HEK293 (cell line): ENCODE measurements at regions of chr1 and their contacts with region 1.

Region 1: DNA sequence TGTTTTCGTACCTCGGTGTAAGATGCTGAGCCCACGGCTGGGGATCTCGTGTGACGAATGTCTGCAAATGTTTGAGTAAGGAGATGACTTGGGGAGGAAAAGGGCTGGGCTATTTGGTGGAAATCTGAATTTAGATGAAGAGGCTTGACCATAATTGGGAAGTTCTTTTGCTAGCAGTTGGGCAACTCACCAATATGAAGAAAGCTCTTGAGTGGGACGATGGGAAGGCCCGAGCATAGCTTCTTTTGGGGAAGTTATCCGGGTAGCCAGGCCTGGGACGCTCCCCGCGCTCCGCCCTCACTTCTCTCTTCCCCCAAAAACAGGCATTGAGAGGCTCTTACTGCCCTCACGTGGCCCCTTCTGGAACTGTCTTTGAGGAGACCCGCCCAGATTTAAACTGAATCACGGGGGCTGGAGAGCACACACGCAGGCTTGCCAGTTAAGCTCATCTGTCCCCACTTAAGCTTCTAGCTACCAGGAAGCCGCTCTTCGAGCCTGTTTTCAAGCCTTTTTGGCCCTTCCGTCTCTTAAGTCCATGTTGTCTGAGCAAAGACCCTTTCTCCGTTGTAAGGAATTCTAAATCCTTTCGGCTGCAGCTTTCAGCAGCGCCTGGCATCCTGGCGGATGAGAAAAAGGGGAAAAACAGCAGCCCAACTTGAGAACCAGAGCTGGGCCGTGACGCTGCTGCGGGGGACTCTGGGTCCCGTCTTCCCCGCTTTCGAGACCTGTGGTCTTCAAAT is 93.1 kb downstream of the NID1 start:
- H3K4me3 ChIP-seq: no peak overlapping the region
- H3K27ac ChIP-seq: no peak overlapping the region
- H3K4me1 ChIP-seq: no peaks in the 10 kb centered on the region; the same call in 1 of the 2 replicates
- CTCF ChIP-seq: peak; percentile 94

Region 2: DNA sequence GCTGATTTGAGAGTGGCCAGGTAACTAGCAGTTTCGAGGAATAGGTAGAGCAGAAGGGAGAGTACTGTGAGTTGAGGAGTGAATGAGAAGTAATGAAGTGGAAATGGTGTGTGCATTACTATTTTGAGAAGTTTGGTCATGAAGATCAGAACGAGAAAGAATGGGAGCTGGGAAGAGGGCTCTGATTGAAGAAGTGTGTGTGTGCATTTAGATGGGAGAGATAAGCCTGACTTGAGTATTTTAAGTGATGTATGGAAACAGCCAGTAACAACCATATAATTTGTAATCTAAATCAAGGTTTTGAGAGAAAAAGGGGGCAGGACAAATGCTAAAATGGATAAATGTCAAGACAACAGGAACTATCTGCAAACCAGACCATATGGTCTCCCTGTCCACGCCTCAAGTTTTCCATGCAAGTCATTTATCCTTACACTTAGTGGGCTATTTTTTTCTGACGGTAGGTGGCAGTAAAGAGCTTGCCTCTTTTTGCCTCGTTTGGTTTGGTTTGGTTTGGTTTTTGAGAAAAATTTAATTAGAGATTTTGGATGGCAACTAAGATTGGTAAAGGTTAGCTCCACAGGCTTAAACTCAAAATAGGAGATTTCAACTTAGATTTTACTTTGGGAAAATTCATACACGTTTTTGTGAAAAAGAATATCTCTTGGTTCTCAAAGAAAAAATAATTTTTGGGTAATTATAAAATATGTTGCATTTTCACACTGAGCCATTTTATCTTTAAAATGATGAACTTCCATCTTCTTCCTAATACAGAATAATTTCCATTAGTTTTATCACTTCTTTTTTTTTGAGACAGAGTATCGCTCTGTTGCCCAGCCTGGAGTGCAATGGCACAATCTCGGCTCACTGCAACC is 458.0 kb before region 1 on chr1:
- CTCF ChIA-PET with region 1: interaction called, 47 read pairs
- POLR2A ChIA-PET with region 1: no interaction called
- H3K4me3 ChIP-seq: no peak overlapping the region
- H3K27ac ChIP-seq: no peak overlapping the region
- H3K4me1 ChIP-seq: no peaks in the 10 kb centered on the region
- CTCF ChIP-seq: peak; percentile 61; the same call in 1 of the 2 replicates

Region 3: DNA sequence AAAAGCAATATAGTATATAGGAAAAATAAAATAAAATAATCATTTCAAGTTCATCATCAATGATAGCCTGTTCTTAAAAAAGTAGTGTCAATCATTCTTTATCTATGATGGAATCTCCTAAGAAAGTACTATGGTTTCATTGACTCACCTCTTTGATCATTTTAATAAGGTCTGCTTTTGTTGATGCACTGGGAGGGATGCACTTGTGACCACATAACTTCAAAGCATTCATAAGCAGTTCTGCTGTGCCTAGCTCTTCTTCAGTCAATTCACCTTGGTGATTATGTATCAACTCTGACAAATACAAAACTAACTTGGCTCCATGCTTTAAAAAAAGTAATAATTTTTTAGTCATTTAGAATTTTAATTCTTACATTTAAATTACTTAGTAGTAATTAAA is 237.4 kb before region 1 on chr1:
- CTCF ChIA-PET with region 1: interaction called, 23 read pairs
- POLR2A ChIA-PET with region 1: no interaction called
- H3K4me3 ChIP-seq: no peak overlapping the region
- H3K27ac ChIP-seq: no peak overlapping the region
- H3K4me1 ChIP-seq: peaks cover 5% of the 10 kb centered on the region; the same call in 1 of the 2 replicates
- CTCF ChIP-seq: no peak

Region 4: GRCh38 chr1:235831148-235831547 is 140.6 kb before region 1 on chr1:
- CTCF ChIA-PET with region 1: interaction called, 18 read pairs
- POLR2A ChIA-PET with region 1: no interaction called
- H3K4me3 ChIP-seq: no peak overlapping the region
- H3K27ac ChIP-seq: no peak overlapping the region
- H3K4me1 ChIP-seq: no peaks in the 10 kb centered on the region
- CTCF ChIP-seq: no peak

Region 5: GRCh38 chr1:235866913-235867845 is 104.6 kb before region 1 on chr1:
- CTCF ChIA-PET with region 1: interaction called, 39 read pairs
- POLR2A ChIA-PET with region 1: interaction called, 14 read pairs
- H3K4me3 ChIP-seq: peak overlapping the region; percentile 70
- H3K27ac ChIP-seq: peak overlapping the region; percentile 73
- H3K4me1 ChIP-seq: peaks cover 9% of the 10 kb centered on the region; the same call in 1 of the 2 replicates
- CTCF ChIP-seq: no peak

Region 6: GRCh38 chr1:235932090-235932510 is 39.6 kb before region 1 on chr1:
- CTCF ChIA-PET with region 1: interaction called, 18 read pairs
- POLR2A ChIA-PET with region 1: no interaction called
- H3K4me3 ChIP-seq: no peak overlapping the region
- H3K27ac ChIP-seq: no peak overlapping the region
- H3K4me1 ChIP-seq: no peaks in the 10 kb centered on the region; the same call in 1 of the 2 replicates
- CTCF ChIP-seq: no peak

Region 7: GRCh38 chr1:235984041-235984825 is 12.5 kb after region 1 on chr1:
- CTCF ChIA-PET with region 1: interaction called, 10 read pairs
- POLR2A ChIA-PET with region 1: no interaction called
- H3K4me3 ChIP-seq: no peak overlapping the region
- H3K27ac ChIP-seq: no peak overlapping the region
- H3K4me1 ChIP-seq: no peaks in the 10 kb centered on the region
- CTCF ChIP-seq: no peak

Region 8: GRCh38 chr1:236045771-236046170 is 74.0 kb after region 1 on chr1:
- CTCF ChIA-PET with region 1: no interaction called
- POLR2A ChIA-PET with region 1: no interaction called
- H3K4me3 ChIP-seq: no peak overlapping the region
- H3K27ac ChIP-seq: no peak overlapping the region
- H3K4me1 ChIP-seq: no peaks in the 10 kb centered on the region
- CTCF ChIP-seq: no peak